Activated CD4-positive, alpha-beta memory T cell treated with anti-CD3 and anti-CD28 coated beads for 36 hours (primary cell): ENCODE measurements at regions of chr6 and their contacts with region 1.

Region 1: DNA sequence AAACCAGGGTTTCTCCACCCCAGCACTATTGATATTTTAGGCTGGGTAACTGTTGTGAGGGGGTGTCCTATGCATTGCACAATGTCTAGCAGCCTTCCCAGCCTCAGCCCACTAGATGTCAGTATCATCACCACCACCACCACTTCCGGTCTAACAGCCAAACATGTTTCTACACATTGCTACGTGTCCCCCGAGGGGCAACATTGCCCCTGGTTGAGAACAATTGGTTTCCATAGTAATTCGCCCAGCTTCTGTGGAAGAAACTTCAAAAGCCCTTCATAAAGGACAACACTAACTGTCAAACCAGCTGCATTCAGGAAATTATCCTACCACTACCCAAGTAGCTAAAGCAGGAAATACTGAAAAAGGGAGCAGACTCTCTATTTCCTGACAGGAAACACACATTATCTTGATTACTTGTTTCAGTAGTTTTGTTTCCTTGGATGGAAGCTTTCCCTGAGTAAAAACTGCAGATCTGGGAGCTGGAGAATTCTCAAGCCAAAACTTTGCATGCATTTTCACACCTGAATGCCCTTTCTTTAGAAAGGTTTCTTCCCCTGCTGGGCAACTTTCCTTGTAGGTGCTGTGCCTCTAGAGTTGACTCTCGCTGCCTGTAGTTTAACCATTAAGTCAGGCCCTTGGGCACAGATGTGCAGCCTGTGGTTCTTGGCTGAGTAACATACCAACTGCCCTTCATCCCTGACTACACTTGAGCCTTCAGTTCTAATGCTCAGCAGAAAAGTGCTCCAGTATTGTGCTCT is 23.6 kb downstream of the PKHD1 start:
- DNase-seq: peak; percentile 76
- H3K4me3 Mint-ChIP-seq: no peak overlapping the region
- H3K27ac Mint-ChIP-seq: peak overlapping the region; percentile 38
- H3K4me1 Mint-ChIP-seq: peaks cover 10% of the 10 kb centered on the region
- H3K27me3 Mint-ChIP-seq: no peaks in the 10 kb centered on the region

Region 2: GRCh38 chr6:52049252-52050050 is 14.3 kb before region 1 on chr6:
- CTCF ChIA-PET with region 1: interaction called, 20 read pairs
- POLR2A ChIA-PET with region 1: no interaction called
- intact Hi-C with region 1: no loop called
- DNase-seq: no peak
- H3K4me3 Mint-ChIP-seq: no peak overlapping the region
- H3K27ac Mint-ChIP-seq: no peak overlapping the region
- H3K4me1 Mint-ChIP-seq: no peaks in the 10 kb centered on the region
- H3K27me3 Mint-ChIP-seq: peaks cover 7% of the 10 kb centered on the region

Region 3: GRCh38 chr6:52144201-52145076 is 80.7 kb after region 1 on chr6:
- CTCF ChIA-PET with region 1: interaction called, 3 read pairs
- POLR2A ChIA-PET with region 1: no interaction called
- intact Hi-C with region 1: loop called (anchors 5 kb)
- DNase-seq: no peak
- H3K4me3 Mint-ChIP-seq: no peak overlapping the region
- H3K27ac Mint-ChIP-seq: no peak overlapping the region
- H3K4me1 Mint-ChIP-seq: peaks cover 7% of the 10 kb centered on the region
- H3K27me3 Mint-ChIP-seq: peaks cover 41% of the 10 kb centered on the region

Region 4: DNA sequence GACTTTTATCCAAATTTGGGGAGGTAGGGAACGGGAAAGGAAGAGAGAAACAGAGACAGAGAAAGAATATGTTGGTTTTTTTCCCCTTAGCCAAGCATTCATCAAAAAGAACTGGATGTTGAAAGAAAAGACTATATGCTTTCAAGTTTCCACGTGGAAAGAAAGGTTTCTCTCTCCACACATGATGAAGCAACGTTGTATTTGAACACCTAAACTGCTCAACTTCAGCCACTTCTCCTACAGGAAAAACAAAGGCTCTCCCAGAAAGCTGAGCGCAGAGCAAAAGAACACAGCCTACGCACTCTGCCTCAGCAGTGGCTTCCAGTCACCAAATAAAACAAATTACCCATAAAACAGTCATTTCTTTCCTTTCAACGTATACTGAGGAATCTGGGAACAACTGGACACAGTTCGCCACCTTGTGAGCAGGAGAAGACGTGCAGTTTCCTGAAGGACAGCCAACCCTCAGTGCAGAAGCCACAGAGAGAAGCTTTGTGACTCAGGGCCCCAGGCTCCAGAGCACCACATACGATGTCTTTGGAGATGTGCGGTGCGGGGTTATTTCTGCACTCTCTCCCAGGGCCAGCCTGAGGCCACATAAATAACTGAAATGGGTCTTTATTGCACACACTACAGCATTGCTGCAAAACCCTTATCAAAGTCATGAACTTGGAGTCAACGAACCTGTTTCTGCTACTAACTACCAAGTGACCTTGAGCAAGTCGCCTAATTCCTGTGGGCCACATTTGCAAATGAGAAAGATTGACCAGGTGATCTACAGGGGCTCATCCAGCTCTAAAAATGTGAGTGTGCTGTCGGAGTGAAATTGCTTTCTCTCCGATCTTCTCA is 170.4 kb after region 1 on chr6:
- CTCF ChIA-PET with region 1: interaction called, 11 read pairs
- POLR2A ChIA-PET with region 1: no interaction called
- intact Hi-C with region 1: loop called (anchors 1 kb)
- DNase-seq: peak; percentile 73
- H3K4me3 Mint-ChIP-seq: no peak overlapping the region
- H3K27ac Mint-ChIP-seq: no peak overlapping the region
- H3K4me1 Mint-ChIP-seq: peaks cover 13% of the 10 kb centered on the region
- H3K27me3 Mint-ChIP-seq: peaks cover 39% of the 10 kb centered on the region

Region 5: GRCh38 chr6:52263709-52264540 is 200.2 kb after region 1 on chr6:
- CTCF ChIA-PET with region 1: interaction called, 26 read pairs
- POLR2A ChIA-PET with region 1: no interaction called
- intact Hi-C with region 1: no loop called
- DNase-seq: peak; percentile 82
- H3K4me3 Mint-ChIP-seq: no peak overlapping the region
- H3K27ac Mint-ChIP-seq: peak overlapping the region; percentile 49
- H3K4me1 Mint-ChIP-seq: no peaks in the 10 kb centered on the region
- H3K27me3 Mint-ChIP-seq: no peaks in the 10 kb centered on the region

Region 6: DNA sequence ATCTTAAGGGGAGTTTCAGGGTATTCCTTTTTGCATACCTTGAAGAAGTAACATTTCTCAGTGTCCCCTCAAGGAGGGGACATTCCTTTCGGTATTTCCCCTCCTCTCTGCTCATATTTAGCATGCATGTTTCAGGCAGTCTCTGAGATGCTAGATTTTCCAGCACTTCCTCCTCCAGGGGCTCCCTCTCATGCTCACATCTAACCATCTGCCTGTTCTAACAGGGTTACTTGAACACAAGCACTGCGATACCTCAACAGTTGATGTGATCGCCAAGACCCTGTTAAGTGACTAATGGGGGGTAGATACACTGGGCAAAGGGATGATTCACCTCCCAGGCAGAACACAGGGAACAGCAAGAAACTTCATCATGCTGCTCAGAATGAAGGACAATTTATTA is 233.7 kb after region 1 on chr6:
- CTCF ChIA-PET with region 1: no interaction called
- POLR2A ChIA-PET with region 1: no interaction called
- intact Hi-C with region 1: no loop called
- DNase-seq: peak; percentile 23
- H3K4me3 Mint-ChIP-seq: peak overlapping the region; percentile 64
- H3K27ac Mint-ChIP-seq: peak overlapping the region; percentile 88
- H3K4me1 Mint-ChIP-seq: peaks cover 41% of the 10 kb centered on the region
- H3K27me3 Mint-ChIP-seq: no peaks in the 10 kb centered on the region